HepG2 (cell line): ENCODE measurements at regions of chr4 and their contacts with region 1.

Region 1: GRCh38 chr4:1266881-1267763 is 18.2 kb upstream of the CTBP1 start:
- DNase-seq: no peak
- ATAC-seq: no peak
- H3K4me3 ChIP-seq: no peak overlapping the region
- H3K27ac ChIP-seq: no peak overlapping the region
- H3K4me1 ChIP-seq: no peaks in the 10 kb centered on the region
- H3K27me3 ChIP-seq: no peaks in the 10 kb centered on the region; a peak in 1 of 5 replicates
- CTCF ChIP-seq: no peak
- EP300 ChIP-seq: no peak
- POLR2A ChIP-seq: no peak
- RAD21 ChIP-seq: no peak

Region 2: GRCh38 chr4:1130316-1131186 is 136.6 kb before region 1 on chr4:
- CTCF ChIA-PET with region 1: interaction called, 25 read pairs
- POLR2A ChIA-PET with region 1: no interaction called
- in situ Hi-C with region 1: loop called (anchors 5 kb)
- intact Hi-C with region 1: loop called (anchors 1 kb)
- DNase-seq: peak; percentile 56
- ATAC-seq: peak; percentile 97
- H3K4me3 ChIP-seq: no peak overlapping the region
- H3K27ac ChIP-seq: no peak overlapping the region
- H3K4me1 ChIP-seq: no peaks in the 10 kb centered on the region
- H3K27me3 ChIP-seq: peaks cover 1 to 9% of the 10 kb centered on the region in 2 experiments; a peak in 1 of 5 replicates
- CTCF ChIP-seq: peak; percentile 99
- EP300 ChIP-seq: no peak
- POLR2A ChIP-seq: no peak
- RAD21 ChIP-seq: peak; percentile 90

Region 3: DNA sequence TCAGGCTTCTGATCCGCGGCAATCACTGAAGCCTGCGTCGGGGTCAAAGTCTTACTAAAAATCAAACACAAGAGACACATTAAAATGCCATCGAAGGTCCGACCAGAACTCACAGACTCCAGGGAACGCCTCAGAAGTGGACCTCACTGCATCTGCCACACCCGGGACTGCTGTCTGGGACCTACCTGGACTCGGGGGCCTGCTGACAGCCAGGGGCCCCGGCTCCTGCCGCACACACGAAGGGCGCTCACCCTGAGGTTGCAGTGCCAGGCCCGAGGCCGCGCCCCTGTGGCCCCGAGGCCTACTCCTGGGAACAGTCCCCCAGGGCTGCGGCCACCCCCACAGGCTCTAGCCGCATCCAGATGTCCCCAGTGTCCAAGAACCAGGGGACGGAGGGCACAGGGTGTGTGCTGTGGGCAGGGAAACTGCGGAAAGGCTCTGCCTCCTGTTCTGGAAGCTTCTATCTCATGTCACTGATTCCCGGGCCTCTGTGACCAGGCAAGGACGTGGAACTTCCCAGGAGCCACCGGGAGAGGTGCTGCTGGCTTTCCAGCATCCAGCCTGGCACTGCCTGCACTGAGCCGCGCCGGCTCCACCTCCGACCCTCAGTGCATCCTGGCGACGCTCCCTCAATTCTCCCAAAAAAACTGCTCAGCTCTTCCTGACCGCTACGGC is 25.5 kb before region 1 on chr4:
- CTCF ChIA-PET with region 1: no interaction called
- POLR2A ChIA-PET with region 1: no interaction called
- in situ Hi-C with region 1: no loop called
- intact Hi-C with region 1: no loop called
- DNase-seq: no peak
- ATAC-seq: no peak
- H3K4me3 ChIP-seq: no peak overlapping the region
- H3K27ac ChIP-seq: no peak overlapping the region
- H3K4me1 ChIP-seq: peaks cover 18% of the 10 kb centered on the region
- H3K27me3 ChIP-seq: no peaks in the 10 kb centered on the region
- CTCF ChIP-seq: no peak
- EP300 ChIP-seq: no peak
- POLR2A ChIP-seq: no peak
- RAD21 ChIP-seq: no peak